SK-N-SH (cell line): ENCODE measurements at regions of chr7 and their contacts with region 1.

Region 1: GRCh38 chr7:1593091-1593866 is 23.4 kb upstream of the PSMG3 start:
- DNase-seq: peak; percentile 78
- H3K4me3 ChIP-seq: no peak overlapping the region
- H3K27ac ChIP-seq: peak overlapping the region in 1 of 2 experiments; percentile 85; a peak in 2 of 4 replicates
- H3K4me1 ChIP-seq: peaks cover 0 to 65% of the 10 kb centered on the region in 2 experiments; a peak in 1 of 4 replicates
- H3K27me3 ChIP-seq: peaks cover 50% of the 10 kb centered on the region
- CTCF ChIP-seq: peak; percentile 51
- EP300 ChIP-seq: peak in 1 of 2 experiments; percentile 40; a peak in 1 of 4 replicates
- RAD21 ChIP-seq: no peak

Region 2: GRCh38 chr7:1579481-1580421 is 13.5 kb before region 1 on chr7:
- CTCF ChIA-PET with region 1: interaction called, 19 read pairs
- POLR2A ChIA-PET with region 1: no interaction called
- DNase-seq: peak; percentile 93
- H3K4me3 ChIP-seq: no peak overlapping the region
- H3K27ac ChIP-seq: peak overlapping the region in 1 of 2 experiments; percentile 31; a peak in 1 of 4 replicates
- H3K4me1 ChIP-seq: peaks cover 0 to 12% of the 10 kb centered on the region in 2 experiments; a peak in 1 of 4 replicates
- H3K27me3 ChIP-seq: no peaks in the 10 kb centered on the region
- CTCF ChIP-seq: peak; percentile 95
- EP300 ChIP-seq: no peak
- RAD21 ChIP-seq: peak; percentile 98

Region 3: DNA sequence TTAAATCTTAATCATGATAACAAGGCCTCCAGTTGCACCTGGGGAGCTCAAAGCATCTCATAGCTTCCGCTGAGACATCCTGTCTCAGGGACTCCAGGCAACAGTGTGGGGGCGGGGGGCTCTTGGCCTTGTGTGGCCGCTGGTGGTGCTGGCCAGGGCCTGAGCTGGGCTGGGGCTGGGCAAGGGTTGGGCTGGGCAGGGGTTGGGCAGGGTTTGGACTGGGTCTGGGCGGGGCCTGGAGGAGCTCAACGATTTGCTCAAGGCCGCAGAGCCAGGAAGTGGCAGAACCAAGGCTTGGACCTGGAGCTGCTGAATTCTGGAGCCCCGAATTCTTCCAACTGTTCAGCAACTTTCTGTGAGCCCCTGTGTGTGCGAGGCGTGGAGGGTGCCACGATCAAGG is 14.4 kb after region 1 on chr7:
- CTCF ChIA-PET with region 1: interaction called, 14 read pairs
- POLR2A ChIA-PET with region 1: interaction called, 5 read pairs
- DNase-seq: peak; percentile 51
- H3K4me3 ChIP-seq: no peak overlapping the region
- H3K27ac ChIP-seq: no peak overlapping the region; a peak in 1 of 4 replicates
- H3K4me1 ChIP-seq: peaks cover 0 to 21% of the 10 kb centered on the region in 2 experiments; a peak in 1 of 4 replicates
- H3K27me3 ChIP-seq: peaks cover 13% of the 10 kb centered on the region; the same call in 1 of the 2 replicates
- CTCF ChIP-seq: no peak
- EP300 ChIP-seq: no peak
- RAD21 ChIP-seq: no peak

Region 4: GRCh38 chr7:1638215-1638661 is 45.0 kb after region 1 on chr7:
- CTCF ChIA-PET with region 1: interaction called, 12 read pairs
- POLR2A ChIA-PET with region 1: interaction called, 12 read pairs
- DNase-seq: no peak
- H3K4me3 ChIP-seq: no peak overlapping the region
- H3K27ac ChIP-seq: peak overlapping the region in 1 of 2 experiments; percentile 99; a peak in 2 of 4 replicates
- H3K4me1 ChIP-seq: peaks cover 0 to 52% of the 10 kb centered on the region in 2 experiments; a peak in 1 of 4 replicates
- H3K27me3 ChIP-seq: 0 out of 2 replicates have a peak, but pooled peaks cover 5% of the 10 kb centered on the region
- CTCF ChIP-seq: no peak
- EP300 ChIP-seq: no peak
- RAD21 ChIP-seq: no peak